ENCODE measurements at regions of chr20 and their contacts with region 1.

Region 1: GRCh38 chr20:10090588-10091166 is 55.9 kb downstream of the ANKEF1 start:
- DNase-seq: peak; percentile 50
- H3K4me3 Mint-ChIP-seq: no peak overlapping the region
- H3K27ac Mint-ChIP-seq: no peak overlapping the region
- H3K4me1 Mint-ChIP-seq: peaks cover 8% of the 10 kb centered on the region
- H3K27me3 Mint-ChIP-seq: no peaks in the 10 kb centered on the region
- CTCF ChIP-seq: peak; percentile 31

Region 2: DNA sequence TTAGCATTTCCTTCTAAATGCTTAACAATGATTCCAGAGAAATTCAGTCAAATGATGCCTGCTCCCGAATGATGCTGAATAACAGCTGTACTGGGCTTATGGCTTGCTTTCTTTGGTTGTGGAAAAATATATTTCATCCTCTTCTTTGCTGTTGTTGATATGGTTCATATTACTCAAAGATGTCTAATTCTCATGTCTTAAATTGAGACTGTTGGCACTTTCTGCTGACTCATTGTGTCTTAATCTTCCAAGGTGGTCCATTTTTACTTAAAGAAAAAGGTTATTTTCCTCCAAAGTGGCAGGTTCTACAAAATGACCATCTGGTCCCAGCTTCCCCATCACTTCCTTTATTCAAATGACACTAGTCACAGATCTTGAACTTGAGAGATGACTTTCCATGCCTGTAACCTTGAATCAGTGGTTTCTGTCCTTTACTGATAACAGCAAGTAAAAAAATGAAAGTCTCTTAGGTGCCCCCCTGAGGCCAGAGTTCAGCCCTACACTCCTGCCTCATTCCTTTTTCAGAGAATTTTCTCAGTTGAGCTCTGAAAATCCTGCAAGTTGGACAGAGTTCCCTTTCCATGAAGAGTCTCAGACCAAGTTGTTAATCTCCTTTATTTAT is 134.9 kb after region 1 on chr20:
- CTCF ChIA-PET with region 1: no interaction called
- intact Hi-C with region 1: loop called (anchors 10 kb)
- DNase-seq: no peak
- H3K4me3 Mint-ChIP-seq: no peak overlapping the region
- H3K27ac Mint-ChIP-seq: no peak overlapping the region
- H3K4me1 Mint-ChIP-seq: no peaks in the 10 kb centered on the region
- H3K27me3 Mint-ChIP-seq: peaks cover 28% of the 10 kb centered on the region
- CTCF ChIP-seq: no peak

Region 3: DNA sequence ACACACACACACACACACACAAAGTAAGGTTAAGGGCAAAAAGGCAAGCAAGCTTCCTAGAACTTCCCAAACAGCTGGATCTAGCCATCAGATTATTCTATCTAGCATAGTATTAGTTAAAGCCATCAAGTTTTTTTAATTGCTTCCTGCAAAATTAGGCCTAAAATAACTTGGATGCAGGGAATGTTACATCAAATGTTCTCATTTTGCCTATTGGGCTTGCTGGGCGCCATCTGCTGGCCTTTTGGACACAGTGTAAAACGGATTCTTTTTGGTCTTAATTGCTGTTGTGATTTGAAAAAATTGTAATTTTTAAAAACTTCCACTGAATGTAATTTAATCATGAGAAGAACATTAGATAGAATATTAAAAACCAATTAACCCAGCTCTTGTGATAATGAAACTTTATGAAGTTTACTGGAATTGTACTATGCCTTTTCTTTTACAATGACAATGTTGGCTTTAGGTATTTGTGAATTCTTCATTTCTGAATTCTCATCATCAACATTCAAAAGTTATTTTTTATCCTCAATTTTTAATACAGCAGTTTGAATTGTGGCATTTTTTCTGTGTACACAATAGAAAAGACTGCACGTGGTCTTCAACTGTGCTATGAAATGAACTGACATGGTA is 336.5 kb after region 1 on chr20:
- CTCF ChIA-PET with region 1: no interaction called
- intact Hi-C with region 1: loop called (anchors 5 kb)
- DNase-seq: peak; percentile 32
- H3K4me3 Mint-ChIP-seq: no peak overlapping the region
- H3K27ac Mint-ChIP-seq: peak overlapping the region; percentile 57
- H3K4me1 Mint-ChIP-seq: peaks cover 64% of the 10 kb centered on the region
- H3K27me3 Mint-ChIP-seq: no peaks in the 10 kb centered on the region
- CTCF ChIP-seq: peak; percentile 36

Measured in Calu3 (cell line).